Endothelial cell of umbilical vein (primary cell): ENCODE measurements at regions of chr15 and their contacts with region 1.

Region 1: GRCh38 chr15:67065444-67066093 is at the start of gene SMAD3:
- DNase-seq: peak; percentile 93
- H3K4me3 ChIP-seq: peak within 1 kb of the TSS; percentile 57 to 87 (median 83)
- H3K27ac ChIP-seq: peak within 1 kb of the TSS; percentile 89
- H3K4me1 ChIP-seq: peaks cover 31% of the 10 kb centered on the region
- H3K27me3 ChIP-seq: no peaks in the 10 kb centered on the region
- CTCF ChIP-seq: peak in 1 of 2 donors; percentile 6
- POLR2A ChIP-seq: peak; percentile 80
- total RNA-seq, gene SMAD3: 71.7 and 88.2 TPM in 2 replicates

Region 2: GRCh38 chr15:66946578-66947164 is 118.9 kb before region 1 on chr15:
- CTCF ChIA-PET with region 1: interaction called, 34 read pairs
- POLR2A ChIA-PET with region 1: no interaction called
- dilution Hi-C with region 1: no loop called
- intact Hi-C with region 1: loop called (anchors 1 kb)
- DNase-seq: peak; percentile 70
- H3K4me3 ChIP-seq: no peak overlapping the region
- H3K27ac ChIP-seq: no peak overlapping the region
- H3K4me1 ChIP-seq: peaks cover 4% of the 10 kb centered on the region
- H3K27me3 ChIP-seq: no peaks in the 10 kb centered on the region
- CTCF ChIP-seq: peak; percentile 81
- POLR2A ChIP-seq: no peak

Region 3: GRCh38 chr15:67024314-67024997 is 41.1 kb before region 1 on chr15:
- CTCF ChIA-PET with region 1: interaction called, 3 read pairs
- POLR2A ChIA-PET with region 1: no interaction called
- dilution Hi-C with region 1: no loop called
- intact Hi-C with region 1: loop called (anchors 1 kb)
- DNase-seq: peak; percentile 92
- H3K4me3 ChIP-seq: no peak overlapping the region
- H3K27ac ChIP-seq: peak overlapping the region; percentile 77
- H3K4me1 ChIP-seq: peaks cover 38% of the 10 kb centered on the region
- H3K27me3 ChIP-seq: no peaks in the 10 kb centered on the region
- CTCF ChIP-seq: no peak
- POLR2A ChIP-seq: no peak

Region 4: GRCh38 chr15:67076147-67076843 is 10.7 kb after region 1 on chr15:
- CTCF ChIA-PET with region 1: interaction called, 4 read pairs
- POLR2A ChIA-PET with region 1: no interaction called
- dilution Hi-C with region 1: no loop called
- intact Hi-C with region 1: loop called (anchors 1 kb)
- DNase-seq: peak; percentile 95
- H3K4me3 ChIP-seq: no peak overlapping the region
- H3K27ac ChIP-seq: peak overlapping the region; percentile 76
- H3K4me1 ChIP-seq: peaks cover 72% of the 10 kb centered on the region
- H3K27me3 ChIP-seq: no peaks in the 10 kb centered on the region
- CTCF ChIP-seq: no peak
- POLR2A ChIP-seq: no peak

Region 5: GRCh38 chr15:67109141-67110034 is 43.8 kb after region 1 on chr15:
- CTCF ChIA-PET with region 1: interaction called, 7 read pairs
- POLR2A ChIA-PET with region 1: interaction called, 3 read pairs
- dilution Hi-C with region 1: no loop called
- intact Hi-C with region 1: loop called (anchors 1 kb)
- DNase-seq: peak; percentile 94
- H3K4me3 ChIP-seq: no peak overlapping the region
- H3K27ac ChIP-seq: peak overlapping the region; percentile 95
- H3K4me1 ChIP-seq: peaks cover 63% of the 10 kb centered on the region
- H3K27me3 ChIP-seq: no peaks in the 10 kb centered on the region
- CTCF ChIP-seq: no peak
- POLR2A ChIP-seq: no peak

Region 6: DNA sequence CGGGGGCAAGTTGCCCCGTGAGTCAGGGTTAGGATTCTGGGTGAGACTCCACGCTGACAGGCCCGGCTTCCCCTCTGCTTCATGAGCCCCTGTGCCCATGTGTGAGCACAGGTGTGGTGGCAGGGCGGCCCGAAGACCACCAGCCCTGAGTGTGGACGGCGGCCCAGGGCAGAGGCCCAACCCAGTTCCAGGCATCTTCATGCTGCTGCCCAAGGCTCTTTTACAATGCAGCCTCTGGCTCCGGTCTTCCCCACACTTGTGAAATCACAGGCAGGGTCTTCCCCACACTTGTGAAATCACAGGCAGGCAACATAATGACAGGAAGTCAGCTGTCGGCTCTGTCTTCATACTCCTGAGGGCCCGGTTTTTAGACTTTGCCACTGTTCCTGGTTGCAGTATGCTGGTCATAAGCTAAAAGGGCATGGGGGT is 110.1 kb after region 1 on chr15:
- CTCF ChIA-PET with region 1: interaction called, 4 read pairs
- POLR2A ChIA-PET with region 1: interaction called, 3 read pairs
- dilution Hi-C with region 1: no loop called
- intact Hi-C with region 1: loop called (anchors 1 kb)
- DNase-seq: peak; percentile 54
- H3K4me3 ChIP-seq: no peak overlapping the region
- H3K27ac ChIP-seq: peak overlapping the region; percentile 87
- H3K4me1 ChIP-seq: peaks cover 56% of the 10 kb centered on the region
- H3K27me3 ChIP-seq: no peaks in the 10 kb centered on the region
- CTCF ChIP-seq: no peak
- POLR2A ChIP-seq: no peak

Region 7: DNA sequence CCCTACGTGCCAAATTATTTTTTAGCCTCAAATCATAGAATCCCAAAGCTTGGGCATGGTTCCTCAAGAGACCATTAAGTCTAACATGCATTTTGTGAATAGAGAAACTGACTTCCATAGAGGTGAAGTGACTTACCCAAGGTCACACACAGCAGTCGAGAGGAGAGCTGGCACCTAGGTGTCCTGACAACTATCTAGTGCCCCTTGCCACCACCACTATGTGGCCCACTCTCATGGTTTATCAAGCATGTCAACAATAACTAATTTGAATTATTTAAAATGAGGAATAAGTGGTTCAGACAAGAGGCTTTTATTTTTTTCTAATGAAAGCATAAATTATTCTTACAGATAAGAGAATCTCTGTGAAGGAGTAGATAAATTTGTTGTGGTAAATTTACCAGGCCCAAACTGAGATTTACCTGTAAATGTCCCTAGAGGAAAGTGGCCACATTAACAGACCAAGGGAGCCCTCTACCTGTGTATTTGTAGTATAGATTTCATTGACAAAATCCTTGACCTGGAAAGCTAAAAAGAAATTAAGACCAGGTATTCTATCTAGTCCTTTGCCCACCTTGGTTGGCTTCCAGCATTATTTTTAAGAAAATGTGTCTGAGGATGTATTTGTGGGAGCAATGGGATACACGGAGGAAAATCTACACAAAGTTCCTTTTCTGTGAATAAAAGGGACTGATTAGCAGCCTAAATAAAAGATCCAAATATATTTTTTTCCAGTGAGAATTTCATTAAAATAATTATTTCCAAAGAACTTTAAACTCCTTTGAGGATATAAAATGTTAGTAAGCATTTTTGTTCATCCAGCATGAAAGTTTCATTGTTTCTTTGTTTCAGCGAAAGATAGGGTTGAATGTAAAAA is 238.2 kb after region 1 on chr15:
- CTCF ChIA-PET with region 1: no interaction called
- POLR2A ChIA-PET with region 1: no interaction called
- dilution Hi-C with region 1: no loop called
- intact Hi-C with region 1: loop called (anchors 5 kb)
- DNase-seq: peak; percentile 49
- H3K4me3 ChIP-seq: no peak overlapping the region
- H3K27ac ChIP-seq: no peak overlapping the region
- H3K4me1 ChIP-seq: no peaks in the 10 kb centered on the region
- H3K27me3 ChIP-seq: no peaks in the 10 kb centered on the region
- CTCF ChIP-seq: no peak
- POLR2A ChIP-seq: no peak